CD14-positive monocyte (primary cell): ENCODE measurements at regions of chr4 and their contacts with region 1.

Region 1: GRCh38 chr4:113781439-113782040 is 20.0 kb upstream of the CAMK2D start:
- DNase-seq: peak; percentile 25 to 65 (median 63)
- H3K4me3 ChIP-seq: no peak overlapping the region
- H3K4me3 Mint-ChIP-seq: no peak overlapping the region
- H3K27ac ChIP-seq: no peak overlapping the region
- H3K27ac Mint-ChIP-seq: peak overlapping the region in 2 of 7 donors; percentile 27 to 50
- H3K4me1 ChIP-seq: peaks cover 36% of the 10 kb centered on the region in 2 donors
- H3K4me1 Mint-ChIP-seq: peaks cover 35% of the 10 kb centered on the region
- H3K27me3 ChIP-seq: no peaks in the 10 kb centered on the region
- H3K27me3 Mint-ChIP-seq: peaks cover 0 to 2% (median 0%) of the 10 kb centered on the region in 3 donors
- CTCF ChIP-seq: peak; percentile 85

Region 2: DNA sequence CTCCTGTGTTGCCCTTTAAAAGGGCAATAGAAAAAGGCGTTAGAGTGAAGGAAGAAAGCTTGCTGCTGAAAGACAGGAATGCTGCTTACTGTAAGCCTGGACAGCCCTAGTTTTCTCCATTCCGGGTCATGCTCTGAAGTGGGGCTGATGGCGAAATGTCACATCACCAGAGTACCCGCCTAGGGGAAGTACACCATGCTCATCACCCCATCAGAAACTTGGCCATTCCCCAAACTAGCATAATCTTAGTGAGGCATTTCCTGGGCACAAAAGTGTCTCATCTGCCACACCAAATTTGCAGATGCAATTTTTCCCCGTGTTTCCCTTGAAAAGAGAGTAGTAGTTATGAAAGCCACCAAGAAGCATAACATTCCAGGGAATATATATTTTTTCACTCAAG is 27.8 kb after region 1 on chr4:
- intact Hi-C with region 1: loop called in 1 of 2 experiments (anchors 2 kb)
- DNase-seq: peak; percentile 89 to 99 (median 91)
- H3K4me3 ChIP-seq: no peak overlapping the region
- H3K4me3 Mint-ChIP-seq: peak overlapping the region in 1 of 2 donors; percentile 23
- H3K27ac ChIP-seq: peak overlapping the region; percentile 38 to 80
- H3K27ac Mint-ChIP-seq: peak overlapping the region; percentile 84 to 95 (median 92)
- H3K4me1 ChIP-seq: peaks cover 35 to 47% of the 10 kb centered on the region in 2 donors
- H3K4me1 Mint-ChIP-seq: peaks cover 33% of the 10 kb centered on the region
- H3K27me3 ChIP-seq: no peaks in the 10 kb centered on the region
- H3K27me3 Mint-ChIP-seq: no peaks in the 10 kb centered on the region
- CTCF ChIP-seq: no peak

Region 3: DNA sequence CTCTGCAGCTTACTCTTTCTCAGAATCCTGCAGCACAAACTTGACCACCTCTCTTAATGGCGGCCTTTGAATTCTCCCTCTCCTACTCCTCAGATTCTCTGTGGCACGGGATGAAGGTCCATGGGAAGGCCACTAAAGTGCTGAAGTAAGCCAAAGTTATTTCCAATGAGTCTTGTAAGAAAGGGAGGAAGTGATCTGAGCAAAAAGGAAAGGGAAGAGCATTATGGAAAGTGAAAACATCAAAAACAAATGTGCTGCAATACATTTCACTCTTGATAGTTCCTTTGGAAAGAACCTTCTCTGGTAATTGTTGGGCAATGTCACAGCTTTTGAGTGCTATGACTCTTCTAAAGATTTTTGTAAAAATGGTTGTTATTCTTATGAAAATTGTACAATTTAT is 34.3 kb after region 1 on chr4:
- intact Hi-C with region 1: loop called (anchors 2 to 5 kb)
- DNase-seq: peak; percentile 74 to 93 (median 90)
- H3K4me3 ChIP-seq: peak overlapping the region in 1 of 3 experiments; percentile 32
- H3K4me3 Mint-ChIP-seq: peak overlapping the region; percentile 0 to 61
- H3K27ac ChIP-seq: peak overlapping the region; percentile 56 to 77
- H3K27ac Mint-ChIP-seq: peak overlapping the region; percentile 75 to 99 (median 95)
- H3K4me1 ChIP-seq: peaks cover 47 to 54% of the 10 kb centered on the region in 2 donors
- H3K4me1 Mint-ChIP-seq: peaks cover 43% of the 10 kb centered on the region
- H3K27me3 ChIP-seq: no peaks in the 10 kb centered on the region
- H3K27me3 Mint-ChIP-seq: peaks cover 0 to 1% (median 0%) of the 10 kb centered on the region in 3 donors
- CTCF ChIP-seq: no peak

Region 4: GRCh38 chr4:113823291-113823659 is 41.7 kb after region 1 on chr4:
- intact Hi-C with region 1: loop called in 1 of 2 experiments (anchors 5 kb)
- DNase-seq: peak; percentile 66 to 82 (median 81)
- H3K4me3 ChIP-seq: no peak overlapping the region
- H3K4me3 Mint-ChIP-seq: peak overlapping the region in 1 of 2 donors; percentile 23
- H3K27ac ChIP-seq: peak overlapping the region in 1 of 2 donors; percentile 50
- H3K27ac Mint-ChIP-seq: peak overlapping the region; percentile 49 to 88 (median 60)
- H3K4me1 ChIP-seq: peaks cover 41 to 42% of the 10 kb centered on the region in 2 donors
- H3K4me1 Mint-ChIP-seq: peaks cover 47% of the 10 kb centered on the region
- H3K27me3 ChIP-seq: no peaks in the 10 kb centered on the region
- H3K27me3 Mint-ChIP-seq: peaks cover 0 to 1% (median 0%) of the 10 kb centered on the region in 3 donors
- CTCF ChIP-seq: no peak

Region 5: DNA sequence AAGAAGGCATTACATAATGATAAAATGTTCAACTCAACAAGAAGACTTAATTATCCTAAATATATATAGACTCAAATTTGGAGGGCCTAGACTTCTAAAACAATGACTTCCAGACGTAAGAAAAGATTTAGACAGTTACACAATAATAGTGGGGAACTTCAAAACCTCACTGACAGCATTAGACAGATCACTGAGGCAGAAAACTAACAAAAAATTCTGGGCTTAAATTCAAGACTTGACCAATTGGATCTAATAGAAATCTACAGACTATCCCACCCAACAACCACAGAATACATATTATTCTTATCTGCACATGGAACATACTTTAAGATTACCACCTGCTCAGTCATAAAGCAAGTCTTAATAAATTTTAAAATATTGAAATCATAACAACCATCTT is 291.2 kb after region 1 on chr4:
- intact Hi-C with region 1: no loop called
- DNase-seq: no peak
- H3K4me3 ChIP-seq: no peak overlapping the region
- H3K4me3 Mint-ChIP-seq: no peak overlapping the region
- H3K27ac ChIP-seq: no peak overlapping the region
- H3K27ac Mint-ChIP-seq: no peak overlapping the region
- H3K4me1 ChIP-seq: no peaks in the 10 kb centered on the region
- H3K4me1 Mint-ChIP-seq: no peaks in the 10 kb centered on the region
- H3K27me3 ChIP-seq: no peaks in the 10 kb centered on the region
- H3K27me3 Mint-ChIP-seq: peaks cover 0 to 6% (median 0%) of the 10 kb centered on the region in 3 donors
- CTCF ChIP-seq: no peak